Endothelial cell of umbilical vein (primary cell): ENCODE measurements at regions of chr16 and their contacts with region 1.

Region 1: GRCh38 chr16:47141773-47142485 is 1.8 kb downstream of the NETO2 start:
- DNase-seq: peak; percentile 90
- H3K4me3 ChIP-seq: peak overlapping the region; percentile 62 to 83 (median 69)
- H3K27ac ChIP-seq: no peak overlapping the region
- H3K4me1 ChIP-seq: peaks cover 12% of the 10 kb centered on the region
- H3K27me3 ChIP-seq: no peaks in the 10 kb centered on the region
- CTCF ChIP-seq: peak; percentile 94 to 96
- POLR2A ChIP-seq: no peak

Region 2: DNA sequence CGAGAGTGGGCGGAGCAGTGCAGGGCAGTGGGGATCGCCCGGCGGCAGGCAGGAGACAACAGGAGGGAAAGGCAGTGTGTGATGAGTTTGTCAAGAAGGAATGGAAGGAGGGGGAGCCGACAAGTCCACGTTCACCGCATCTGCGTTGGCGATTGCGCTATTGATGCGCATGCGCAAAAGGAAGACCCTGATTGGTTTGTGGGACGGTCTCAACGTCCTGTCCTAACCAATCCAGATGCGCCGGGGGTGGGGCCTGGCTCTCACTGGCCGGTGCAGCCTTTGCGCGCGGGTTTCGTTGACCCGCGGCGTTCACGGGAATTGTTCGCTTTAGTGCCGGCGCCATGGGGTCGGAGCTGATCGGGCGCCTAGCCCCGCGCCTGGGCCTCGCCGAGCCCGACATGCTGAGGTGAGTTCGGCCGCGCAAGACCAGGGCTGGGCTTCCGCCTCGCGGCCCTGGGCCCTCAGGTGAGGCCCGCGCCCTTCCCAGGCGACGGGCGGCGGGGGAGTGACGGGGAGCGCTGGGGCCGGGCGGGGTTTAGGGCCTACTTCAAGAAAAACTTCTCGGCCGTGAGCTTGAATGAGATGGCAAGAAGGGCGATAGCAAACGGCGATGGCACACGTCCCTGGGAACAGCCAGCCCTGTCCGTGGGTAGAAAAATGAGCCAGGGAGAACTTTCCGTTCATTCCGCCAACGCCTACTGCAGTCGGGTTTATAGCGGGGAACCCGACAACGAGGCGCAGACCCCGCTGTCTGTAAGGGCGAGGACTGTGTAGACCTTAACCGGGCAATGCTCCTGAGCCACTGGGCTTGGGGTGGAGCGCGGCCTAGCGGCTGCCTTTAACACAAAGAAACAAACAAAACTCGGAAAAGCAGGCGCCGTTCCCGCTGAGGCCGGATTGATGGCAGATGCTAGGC is 452.3 kb before region 1 on chr16 and contains the start of gene ORC6:
- CTCF ChIA-PET with region 1: no interaction called
- POLR2A ChIA-PET with region 1: no interaction called
- dilution Hi-C with region 1: no loop called
- intact Hi-C with region 1: loop called (anchors 2 kb)
- DNase-seq: peak; percentile 80
- H3K4me3 ChIP-seq: peak within 1 kb of the TSS; percentile 66 to 96 (median 81)
- H3K27ac ChIP-seq: peak within 1 kb of the TSS; percentile 70
- H3K4me1 ChIP-seq: peaks cover 30% of the 10 kb centered on the region
- H3K27me3 ChIP-seq: no peaks in the 10 kb centered on the region
- CTCF ChIP-seq: peak; percentile 36 to 70
- POLR2A ChIP-seq: no peak
- total RNA-seq, gene ORC6: 31.1 and 34.9 TPM in 2 replicates

Region 3: DNA sequence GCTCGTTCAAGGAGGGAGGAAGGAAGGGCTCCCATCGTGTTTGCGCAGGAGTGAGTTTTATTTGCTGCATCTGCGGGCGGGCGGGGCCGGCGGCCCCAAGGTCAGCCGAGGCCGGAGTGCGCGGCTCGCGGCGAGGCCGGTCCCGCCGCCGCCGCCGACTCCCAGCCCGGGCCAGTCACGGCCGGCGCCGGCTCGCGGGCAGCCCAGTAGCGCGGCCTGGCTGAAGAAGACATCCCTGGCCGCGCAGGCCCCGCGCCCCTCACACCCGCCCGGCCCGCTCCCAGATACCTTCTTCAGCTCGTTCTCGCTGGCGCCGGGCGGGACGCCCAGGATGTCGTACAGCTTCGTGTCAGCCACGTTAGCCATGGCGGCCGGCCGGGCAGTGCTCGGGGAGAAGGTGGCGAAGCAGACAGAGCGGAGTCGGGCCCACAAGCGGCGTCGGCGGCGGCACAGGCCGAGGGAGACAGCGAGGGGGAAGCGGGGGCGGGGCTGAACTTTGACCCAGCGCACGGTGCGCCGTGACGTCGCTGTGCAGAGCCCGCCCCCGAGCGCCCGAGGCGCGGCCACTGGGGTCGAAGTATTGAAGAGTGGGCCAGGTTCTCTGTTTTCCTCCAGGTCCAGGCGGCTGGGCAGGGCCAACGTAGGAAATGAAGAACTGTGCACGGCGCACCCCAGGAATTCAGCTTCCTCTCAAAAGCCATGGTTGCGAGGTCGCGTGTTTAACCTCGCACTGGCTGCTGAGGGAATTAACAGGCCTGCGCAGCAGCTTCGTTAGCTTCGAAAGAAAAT is 168.5 kb before region 1 on chr16 and contains the start of gene DNAJA2:
- CTCF ChIA-PET with region 1: interaction called, 16 read pairs
- POLR2A ChIA-PET with region 1: no interaction called
- dilution Hi-C with region 1: no loop called
- intact Hi-C with region 1: loop called (anchors 1 kb)
- DNase-seq: peak; percentile 91
- H3K4me3 ChIP-seq: peak within 1 kb of the TSS; percentile 76 to 94 (median 89)
- H3K27ac ChIP-seq: peak within 1 kb of the TSS; percentile 18
- H3K4me1 ChIP-seq: peaks cover 19% of the 10 kb centered on the region
- H3K27me3 ChIP-seq: no peaks in the 10 kb centered on the region
- CTCF ChIP-seq: no peak
- POLR2A ChIP-seq: peak; percentile 91
- total RNA-seq, gene DNAJA2: 57.5 and 61.4 TPM in 2 replicates

Region 4: DNA sequence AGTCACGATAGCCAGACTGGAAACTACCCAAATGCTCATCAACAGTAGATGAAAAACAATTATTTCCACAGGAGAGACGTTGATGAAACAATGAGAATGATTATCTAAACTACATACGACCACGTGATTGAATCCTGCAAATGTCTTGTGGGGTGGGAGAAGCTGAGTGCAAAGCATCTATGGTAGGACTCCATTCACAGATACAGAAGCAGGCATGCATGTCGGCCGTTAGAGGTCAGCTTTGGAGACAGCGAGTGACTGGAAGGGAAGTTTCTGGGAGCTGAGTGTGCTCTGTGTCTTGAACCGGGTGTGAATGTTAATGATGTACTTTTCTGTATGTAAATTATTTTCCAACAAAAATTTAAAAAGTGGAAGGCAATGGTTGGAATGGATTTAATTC is 96.9 kb before region 1 on chr16:
- CTCF ChIA-PET with region 1: interaction called, 192 read pairs
- POLR2A ChIA-PET with region 1: no interaction called
- dilution Hi-C with region 1: no loop called
- intact Hi-C with region 1: no loop called
- DNase-seq: no peak
- H3K4me3 ChIP-seq: no peak overlapping the region
- H3K27ac ChIP-seq: no peak overlapping the region
- H3K4me1 ChIP-seq: no peaks in the 10 kb centered on the region
- H3K27me3 ChIP-seq: peaks cover 0 to 2% of the 10 kb centered on the region in 2 experiments
- CTCF ChIP-seq: no peak
- POLR2A ChIP-seq: no peak

Region 5: DNA sequence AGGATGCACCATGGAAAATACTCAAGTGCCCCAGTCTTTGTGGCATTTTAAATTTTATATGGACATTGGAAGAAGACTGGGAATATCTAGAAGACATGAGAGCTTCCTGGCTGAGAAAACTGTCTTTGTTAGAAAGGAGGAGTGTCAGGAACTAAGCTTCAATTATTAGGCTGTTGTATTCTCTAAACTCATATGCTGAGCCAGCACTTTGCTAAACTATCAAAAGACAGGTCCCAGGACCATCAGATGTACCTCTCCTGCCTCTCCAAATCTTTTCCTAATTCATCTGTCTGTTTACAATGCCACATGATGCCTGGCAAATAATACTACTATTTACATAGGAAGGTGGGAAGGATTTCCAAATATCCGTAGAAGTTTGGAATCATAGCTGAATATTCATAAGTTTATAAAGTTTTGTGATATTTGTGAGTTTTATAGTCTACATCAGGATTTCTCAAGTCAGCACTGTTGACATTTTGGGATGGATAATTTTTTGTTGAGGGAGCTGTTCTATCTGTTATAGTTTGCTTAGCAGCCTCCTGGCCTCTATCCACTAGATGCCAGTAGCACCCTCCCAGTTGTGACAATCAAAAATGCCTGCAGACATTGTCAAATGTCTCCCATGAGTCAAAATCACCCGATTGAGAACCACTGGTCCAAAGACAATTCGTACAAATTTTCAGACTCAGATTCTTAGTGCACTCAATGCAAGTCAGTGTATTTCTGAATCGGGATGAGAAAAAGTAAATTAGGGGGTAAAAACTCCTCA is 63.0 kb after region 1 on chr16:
- CTCF ChIA-PET with region 1: no interaction called
- POLR2A ChIA-PET with region 1: no interaction called
- dilution Hi-C with region 1: no loop called
- intact Hi-C with region 1: no loop called
- DNase-seq: no peak
- H3K4me3 ChIP-seq: no peak overlapping the region
- H3K27ac ChIP-seq: no peak overlapping the region
- H3K4me1 ChIP-seq: no peaks in the 10 kb centered on the region
- H3K27me3 ChIP-seq: no peaks in the 10 kb centered on the region
- CTCF ChIP-seq: no peak
- POLR2A ChIP-seq: no peak

Region 6: GRCh38 chr16:47258874-47259461 is 117.0 kb after region 1 on chr16:
- CTCF ChIA-PET with region 1: interaction called, 7 read pairs
- POLR2A ChIA-PET with region 1: no interaction called
- dilution Hi-C with region 1: no loop called
- intact Hi-C with region 1: loop called (anchors 5 kb)
- DNase-seq: peak; percentile 33
- H3K4me3 ChIP-seq: no peak overlapping the region
- H3K27ac ChIP-seq: no peak overlapping the region
- H3K4me1 ChIP-seq: no peaks in the 10 kb centered on the region
- H3K27me3 ChIP-seq: no peaks in the 10 kb centered on the region
- CTCF ChIP-seq: peak; percentile 61 to 69
- POLR2A ChIP-seq: no peak

Region 7: GRCh38 chr16:47299587-47299986 is 157.7 kb after region 1 on chr16:
- CTCF ChIA-PET with region 1: no interaction called
- POLR2A ChIA-PET with region 1: no interaction called
- dilution Hi-C with region 1: no loop called
- intact Hi-C with region 1: no loop called
- DNase-seq: no peak
- H3K4me3 ChIP-seq: no peak overlapping the region
- H3K27ac ChIP-seq: no peak overlapping the region
- H3K4me1 ChIP-seq: no peaks in the 10 kb centered on the region
- H3K27me3 ChIP-seq: no peaks in the 10 kb centered on the region
- CTCF ChIP-seq: no peak
- POLR2A ChIP-seq: no peak

Region 8: GRCh38 chr16:48054881-48055601 is 913.1 kb after region 1 on chr16:
- CTCF ChIA-PET with region 1: interaction called, 199 read pairs
- POLR2A ChIA-PET with region 1: no interaction called
- dilution Hi-C with region 1: no loop called
- intact Hi-C with region 1: loop called (anchors 1 kb)
- DNase-seq: peak; percentile 45
- H3K4me3 ChIP-seq: no peak overlapping the region
- H3K27ac ChIP-seq: no peak overlapping the region
- H3K4me1 ChIP-seq: no peaks in the 10 kb centered on the region
- H3K27me3 ChIP-seq: peaks cover 0 to 2% of the 10 kb centered on the region in 2 experiments
- CTCF ChIP-seq: peak; percentile 76 to 87
- POLR2A ChIP-seq: no peak

Region 9: GRCh38 chr16:48164907-48165726 is 1023.2 kb after region 1 on chr16:
- CTCF ChIA-PET with region 1: interaction called, 91 read pairs
- POLR2A ChIA-PET with region 1: no interaction called
- dilution Hi-C with region 1: no loop called
- intact Hi-C with region 1: loop called (anchors 1 kb)
- DNase-seq: peak; percentile 56
- H3K4me3 ChIP-seq: no peak overlapping the region
- H3K27ac ChIP-seq: no peak overlapping the region
- H3K4me1 ChIP-seq: peaks cover 2% of the 10 kb centered on the region
- H3K27me3 ChIP-seq: no peaks in the 10 kb centered on the region
- CTCF ChIP-seq: peak; percentile 66 to 88
- POLR2A ChIP-seq: no peak